PC-3 (cell line): ENCODE measurements at regions of chr19 and their contacts with region 1.

Region 1: DNA sequence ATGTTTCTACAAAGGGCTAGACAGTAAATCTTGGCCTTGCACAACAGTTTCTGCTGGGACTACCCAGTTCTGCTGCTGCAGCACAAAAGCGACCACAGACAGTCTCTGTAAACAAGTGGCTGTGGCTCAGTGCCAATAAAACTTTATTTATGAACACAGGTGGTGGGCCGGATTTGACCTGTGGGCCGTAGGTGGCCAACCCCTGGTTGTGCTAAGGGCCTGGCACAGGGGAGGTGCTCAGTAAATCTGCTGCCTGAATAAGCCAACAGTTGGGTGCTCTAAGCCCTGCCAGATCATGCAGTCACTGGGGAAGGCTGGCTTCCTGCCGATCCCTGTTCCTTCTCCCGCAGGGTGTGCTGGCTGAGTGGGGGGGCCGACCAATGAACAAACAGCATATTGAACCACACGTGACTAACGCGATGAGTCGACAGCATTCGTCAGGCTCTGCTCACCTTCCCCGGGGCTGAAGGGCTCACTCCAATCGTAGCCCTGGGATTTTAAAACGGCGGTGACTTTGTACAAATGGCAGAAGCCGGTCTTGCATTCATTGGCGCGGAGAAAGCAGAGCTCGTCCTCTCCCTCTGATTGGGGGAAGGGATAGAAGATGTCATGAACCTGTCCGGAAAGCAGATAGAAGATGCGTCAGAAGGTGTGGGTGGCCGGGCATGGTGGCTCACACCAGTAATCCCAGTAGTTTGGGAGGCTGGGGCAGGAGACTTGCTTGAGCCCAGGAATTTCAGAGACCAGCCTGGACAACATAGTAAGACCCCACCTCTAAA is 24.3 kb upstream of the MYDGF start:
- DNase-seq: peak; percentile 100
- ATAC-seq: peak; percentile 85
- H3K4me3 ChIP-seq: peak overlapping the region; percentile 1; the same call in 1 of the 2 replicates
- H3K27ac ChIP-seq: peak overlapping the region; percentile 90
- H3K4me1 ChIP-seq: peaks cover 40% of the 10 kb centered on the region
- H3K27me3 ChIP-seq: no peaks in the 10 kb centered on the region
- CTCF ChIP-seq: no peak

Region 2: GRCh38 chr19:4567584-4568071 is 126.8 kb before region 1 on chr19:
- CTCF ChIA-PET with region 1: no interaction called
- POLR2A ChIA-PET with region 1: no interaction called
- intact Hi-C with region 1: no loop called
- DNase-seq: peak; percentile 83
- ATAC-seq: peak; percentile 94
- H3K4me3 ChIP-seq: no peak overlapping the region
- H3K27ac ChIP-seq: no peak overlapping the region
- H3K4me1 ChIP-seq: 0 out of 2 replicates have a peak, but pooled peaks cover 4% of the 10 kb centered on the region
- H3K27me3 ChIP-seq: no peaks in the 10 kb centered on the region
- CTCF ChIP-seq: peak; percentile 97

Region 3: DNA sequence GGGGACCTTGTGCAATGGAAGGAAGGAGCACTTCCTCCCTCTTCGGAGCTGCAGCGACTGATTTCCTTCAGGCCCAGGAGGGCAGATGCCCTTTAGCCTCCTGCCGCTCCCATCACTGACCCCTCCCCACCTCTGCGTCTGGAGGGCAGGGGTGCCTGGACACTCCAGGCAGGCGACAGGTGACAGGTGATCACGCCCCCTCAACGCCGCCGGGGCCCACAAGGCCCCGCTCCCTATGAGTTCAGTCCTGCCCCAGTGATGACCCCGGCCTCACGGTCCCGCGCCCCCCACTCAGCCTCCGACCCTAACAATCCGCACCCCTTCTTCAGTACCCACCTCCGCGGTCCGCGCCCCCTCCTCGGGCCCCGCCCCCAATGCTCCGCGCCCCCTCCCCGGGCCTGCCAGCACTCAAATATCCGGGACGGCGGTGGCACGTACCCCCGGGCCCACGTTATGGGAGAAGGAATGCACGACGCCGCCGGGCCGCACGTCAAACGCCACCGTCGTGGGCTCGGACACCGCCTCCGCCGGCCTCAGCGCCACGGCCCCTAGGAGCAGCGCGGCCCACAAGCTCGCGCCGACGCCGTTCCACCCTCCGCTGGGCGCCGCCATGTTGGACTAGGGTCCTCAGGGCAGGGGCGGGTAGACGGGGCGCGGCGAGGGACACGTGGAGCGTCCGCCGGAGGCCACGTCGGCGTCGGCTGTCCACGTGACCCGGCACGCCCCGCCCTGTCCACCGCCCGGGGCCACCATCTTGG is 24.5 kb before region 1 on chr19 and contains the start of gene MYDGF:
- CTCF ChIA-PET with region 1: no interaction called
- POLR2A ChIA-PET with region 1: no interaction called
- intact Hi-C with region 1: loop called (anchors 1 kb)
- DNase-seq: peak; percentile 90
- ATAC-seq: peak; percentile 88
- H3K4me3 ChIP-seq: peak within 1 kb of the TSS; percentile 82
- H3K27ac ChIP-seq: peak within 1 kb of the TSS; percentile 79
- H3K4me1 ChIP-seq: peaks cover 25% of the 10 kb centered on the region
- H3K27me3 ChIP-seq: no peaks in the 10 kb centered on the region
- CTCF ChIP-seq: no peak
- total RNA-seq, gene MYDGF: 426 and 474 TPM in 2 replicates

Region 4: GRCh38 chr19:4713384-4713951 is 19.1 kb after region 1 on chr19:
- CTCF ChIA-PET with region 1: interaction called, 6 read pairs
- POLR2A ChIA-PET with region 1: interaction called, 8 read pairs
- intact Hi-C with region 1: loop called (anchors 1 kb)
- DNase-seq: peak; percentile 100
- ATAC-seq: peak; percentile 88
- H3K4me3 ChIP-seq: peak overlapping the region; percentile 33; the same call in 1 of the 2 replicates
- H3K27ac ChIP-seq: peak overlapping the region; percentile 85
- H3K4me1 ChIP-seq: peaks cover 53% of the 10 kb centered on the region
- H3K27me3 ChIP-seq: no peaks in the 10 kb centered on the region
- CTCF ChIP-seq: no peak